ENCODE measurements at regions of chr20 and their contacts with region 1.

Region 1: DNA sequence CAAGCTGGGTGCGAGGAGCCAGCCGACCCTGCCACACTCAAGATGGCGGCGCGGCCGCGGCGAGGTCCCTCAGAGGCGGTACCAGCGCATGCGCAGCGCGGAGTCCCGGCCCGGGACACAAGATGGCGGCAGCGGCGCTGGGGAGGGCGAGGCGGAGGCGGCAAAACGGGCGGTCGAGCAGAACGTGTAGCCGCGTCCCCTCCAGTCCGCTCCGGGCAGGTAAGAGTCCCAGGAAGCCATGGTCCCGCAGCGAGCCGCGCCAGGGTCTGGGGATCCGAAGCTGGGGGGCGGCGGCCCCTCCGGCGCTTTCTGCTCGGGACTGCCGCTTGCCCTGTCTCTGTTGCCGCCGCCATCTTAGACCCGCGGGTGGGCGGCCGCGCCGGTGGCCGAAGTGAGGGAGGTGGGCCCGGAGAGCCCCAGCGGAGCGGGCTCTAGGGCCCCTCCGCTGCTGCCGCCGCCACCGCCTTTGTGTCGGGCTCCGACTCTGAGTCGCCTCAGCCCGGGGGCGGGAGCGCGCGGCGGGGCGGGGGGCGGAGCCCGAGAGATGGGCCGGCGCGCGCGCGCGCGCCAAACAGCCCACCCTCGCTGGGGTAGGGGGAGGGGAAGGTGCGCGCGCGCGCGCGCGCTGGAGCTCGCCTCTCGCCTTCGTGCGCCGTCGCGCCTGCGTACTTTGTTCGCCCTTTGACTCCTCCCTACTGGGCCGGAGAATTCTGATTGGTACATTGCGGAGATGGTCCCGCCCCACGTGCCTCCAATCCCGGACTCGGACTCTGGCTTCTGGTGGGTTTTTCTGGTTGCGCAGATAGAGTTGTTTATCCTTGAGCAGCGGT is at the start of gene PCIF1:
- DNase-seq: peak; percentile 97
- ATAC-seq: peak; percentile 80
- H3K4me3 Mint-ChIP-seq: peak within 1 kb of the TSS; percentile 97
- H3K27ac Mint-ChIP-seq: peak within 1 kb of the TSS; percentile 98
- H3K4me1 Mint-ChIP-seq: peaks cover 29% of the 10 kb centered on the region
- H3K27me3 Mint-ChIP-seq: no peaks in the 10 kb centered on the region
- CTCF ChIP-seq: no peak
- total RNA-seq, gene PCIF1: 48.3 and 55.7 TPM in 2 replicates

Region 2: DNA sequence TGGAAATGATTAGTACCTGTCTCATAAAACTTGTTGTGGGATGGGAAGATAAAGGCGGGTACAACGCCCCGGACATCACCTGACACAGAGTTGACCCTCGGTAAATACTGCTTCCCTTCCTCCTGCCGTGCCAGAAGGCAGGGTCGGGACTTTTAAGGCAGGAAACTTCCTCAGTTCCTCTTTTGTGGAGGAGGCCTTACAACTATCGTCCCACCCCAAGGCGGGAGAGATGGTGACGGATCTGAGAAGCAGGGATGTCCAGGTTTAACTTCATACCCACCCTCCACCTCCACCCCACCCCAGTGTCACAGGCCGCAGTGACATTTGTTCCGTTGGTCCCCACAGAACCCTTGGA is 142.5 kb before region 1 on chr20:
- CTCF ChIA-PET with region 1: no interaction called
- POLR2A ChIA-PET with region 1: interaction called, 7 read pairs
- intact Hi-C with region 1: loop called (anchors 1 kb)
- DNase-seq: no peak
- ATAC-seq: peak; percentile 28
- H3K4me3 Mint-ChIP-seq: peak overlapping the region; percentile 92
- H3K27ac Mint-ChIP-seq: peak overlapping the region; percentile 82
- H3K4me1 Mint-ChIP-seq: peaks cover 16% of the 10 kb centered on the region
- H3K27me3 Mint-ChIP-seq: no peaks in the 10 kb centered on the region
- CTCF ChIP-seq: no peak

Region 3: DNA sequence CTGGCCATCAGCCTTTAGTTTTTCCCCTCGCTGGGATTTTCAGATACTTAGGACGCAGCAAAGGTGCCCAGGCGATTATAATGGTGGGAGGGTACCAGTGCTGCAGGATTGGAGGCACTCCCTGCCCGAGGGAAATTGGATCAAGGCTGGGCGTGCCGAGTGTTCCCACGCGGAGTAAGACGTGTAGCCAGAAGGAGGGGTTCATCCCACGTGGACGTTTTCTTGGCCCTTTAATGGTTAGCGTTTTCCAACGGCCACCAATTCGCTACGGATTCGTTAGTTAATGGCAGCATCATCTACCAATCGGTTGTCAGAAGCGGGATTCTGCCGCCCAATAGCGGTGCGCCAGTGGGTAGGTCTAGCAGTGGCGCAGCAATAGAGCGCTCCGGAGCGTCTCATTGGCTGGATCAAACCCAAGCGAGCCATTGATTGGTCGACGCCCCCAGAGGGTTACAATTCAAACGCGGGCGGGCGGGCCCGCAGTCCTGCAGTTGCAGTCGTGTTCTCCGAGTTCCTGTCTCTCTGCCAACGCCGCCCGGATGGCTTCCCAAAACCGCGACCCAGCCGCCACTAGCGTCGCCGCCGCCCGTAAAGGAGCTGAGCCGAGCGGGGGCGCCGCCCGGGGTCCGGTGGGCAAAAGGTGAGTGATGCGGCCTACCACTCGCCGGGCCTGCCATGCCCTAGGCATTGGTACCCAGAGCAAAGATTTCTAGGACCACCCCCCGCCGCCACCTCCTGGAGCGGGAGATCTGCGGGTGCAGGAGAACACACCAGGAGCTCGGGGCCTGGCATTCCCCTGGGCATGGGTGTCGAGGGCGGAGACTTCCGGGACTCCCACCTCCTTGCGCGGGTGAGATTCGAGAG is 122.4 kb before region 1 on chr20 and contains the start of gene UBE2C:
- CTCF ChIA-PET with region 1: no interaction called
- POLR2A ChIA-PET with region 1: interaction called, 6 read pairs
- intact Hi-C with region 1: loop called (anchors 1 kb)
- DNase-seq: peak; percentile 79
- ATAC-seq: peak; percentile 100
- H3K4me3 Mint-ChIP-seq: peak within 1 kb of the TSS; percentile 84
- H3K27ac Mint-ChIP-seq: peak within 1 kb of the TSS; percentile 59
- H3K4me1 Mint-ChIP-seq: peaks cover 17% of the 10 kb centered on the region
- H3K27me3 Mint-ChIP-seq: no peaks in the 10 kb centered on the region
- CTCF ChIP-seq: no peak
- total RNA-seq, gene UBE2C: 2.4 and 3.3 TPM in 2 replicates

Region 4: GRCh38 chr20:45880988-45881788 is 53.6 kb before region 1 on chr20 and contains the start of gene ZSWIM1:
- CTCF ChIA-PET with region 1: no interaction called
- POLR2A ChIA-PET with region 1: interaction called, 37 read pairs
- intact Hi-C with region 1: loop called (anchors 1 kb)
- DNase-seq: peak; percentile 98
- ATAC-seq: peak; percentile 99
- H3K4me3 Mint-ChIP-seq: peak within 1 kb of the TSS; percentile 90
- H3K27ac Mint-ChIP-seq: peak within 1 kb of the TSS; percentile 93
- H3K4me1 Mint-ChIP-seq: peaks cover 34% of the 10 kb centered on the region
- H3K27me3 Mint-ChIP-seq: no peaks in the 10 kb centered on the region
- CTCF ChIP-seq: no peak
- total RNA-seq, gene ZSWIM1: 13.9 and 15.1 TPM in 2 replicates

Region 5: GRCh38 chr20:45910670-45911485 is 23.9 kb before region 1 on chr20:
- CTCF ChIA-PET with region 1: no interaction called
- POLR2A ChIA-PET with region 1: interaction called, 68 read pairs
- intact Hi-C with region 1: loop called (anchors 1 kb)
- DNase-seq: peak; percentile 97
- ATAC-seq: peak; percentile 92
- H3K4me3 Mint-ChIP-seq: peak overlapping the region; percentile 90
- H3K27ac Mint-ChIP-seq: peak overlapping the region; percentile 83
- H3K4me1 Mint-ChIP-seq: peaks cover 31% of the 10 kb centered on the region
- H3K27me3 Mint-ChIP-seq: peaks cover 6% of the 10 kb centered on the region
- CTCF ChIP-seq: no peak

Region 6: GRCh38 chr20:45963059-45964005 is 28.5 kb after region 1 on chr20:
- CTCF ChIA-PET with region 1: no interaction called
- POLR2A ChIA-PET with region 1: interaction called, 110 read pairs
- intact Hi-C with region 1: no loop called
- DNase-seq: no peak
- ATAC-seq: no peak
- H3K4me3 Mint-ChIP-seq: no peak overlapping the region
- H3K27ac Mint-ChIP-seq: no peak overlapping the region
- H3K4me1 Mint-ChIP-seq: peaks cover 21% of the 10 kb centered on the region
- H3K27me3 Mint-ChIP-seq: no peaks in the 10 kb centered on the region
- CTCF ChIP-seq: no peak